ENCODE measurements at regions of chr14 and their contacts with region 1.

Region 1: GRCh38 chr14:70714055-70714621 is 72.4 kb downstream of the TTC9 start:
- DNase-seq: peak; percentile 67
- H3K4me3 ChIP-seq: no peak overlapping the region
- H3K27ac ChIP-seq: no peak overlapping the region
- H3K4me1 ChIP-seq: no peaks in the 10 kb centered on the region
- H3K27me3 ChIP-seq: peaks cover 3 to 14% of the 10 kb centered on the region in 2 experiments
- CTCF ChIP-seq: peak; percentile 33 to 46
- POLR2A ChIP-seq: no peak

Region 2: GRCh38 chr14:69784942-69785341 is 929.2 kb before region 1 on chr14:
- CTCF ChIA-PET with region 1: no interaction called
- POLR2A ChIA-PET with region 1: no interaction called
- dilution Hi-C with region 1: no loop called
- intact Hi-C with region 1: no loop called
- DNase-seq: no peak
- H3K4me3 ChIP-seq: no peak overlapping the region
- H3K27ac ChIP-seq: no peak overlapping the region
- H3K4me1 ChIP-seq: no peaks in the 10 kb centered on the region
- H3K27me3 ChIP-seq: no peaks in the 10 kb centered on the region
- CTCF ChIP-seq: no peak
- POLR2A ChIP-seq: no peak

Region 3: GRCh38 chr14:70622111-70622712 is 91.9 kb before region 1 on chr14:
- CTCF ChIA-PET with region 1: interaction called, 17 read pairs
- POLR2A ChIA-PET with region 1: no interaction called
- dilution Hi-C with region 1: no loop called
- intact Hi-C with region 1: loop called (anchors 1 kb)
- DNase-seq: peak; percentile 45
- H3K4me3 ChIP-seq: no peak overlapping the region
- H3K27ac ChIP-seq: no peak overlapping the region
- H3K4me1 ChIP-seq: no peaks in the 10 kb centered on the region
- H3K27me3 ChIP-seq: peaks cover 0 to 3% of the 10 kb centered on the region in 2 experiments
- CTCF ChIP-seq: peak; percentile 40 to 55
- POLR2A ChIP-seq: no peak

Region 4: DNA sequence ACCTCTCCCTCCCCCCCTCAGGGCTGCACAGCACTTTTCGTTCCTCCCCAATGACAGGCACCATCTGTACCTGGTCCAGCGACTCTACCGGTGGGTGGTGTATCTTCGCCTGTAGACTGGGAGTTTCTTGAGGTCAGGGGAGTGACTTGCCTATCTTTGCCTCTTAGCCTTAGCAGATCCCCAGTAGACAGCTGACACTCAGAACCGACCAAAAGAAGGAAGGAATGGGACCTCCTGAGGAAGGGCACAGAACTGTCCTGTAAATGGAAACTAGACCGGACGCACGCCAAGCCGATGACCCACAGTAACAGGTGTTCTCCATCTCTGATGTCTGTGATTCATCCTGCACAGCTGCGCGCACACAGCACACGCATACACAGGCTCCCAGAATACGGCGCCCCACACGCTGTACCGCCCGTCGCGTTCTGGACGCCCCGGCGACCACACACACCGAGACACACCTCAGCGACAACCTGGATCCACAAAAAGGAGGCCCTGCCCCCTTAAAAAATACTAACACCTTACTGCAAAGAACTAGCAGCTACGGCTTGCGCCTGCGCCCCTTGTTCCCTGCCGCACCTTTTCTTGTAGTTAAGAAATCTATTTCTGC is 73.1 kb before region 1 on chr14:
- CTCF ChIA-PET with region 1: no interaction called
- POLR2A ChIA-PET with region 1: no interaction called
- dilution Hi-C with region 1: no loop called
- intact Hi-C with region 1: loop called (anchors 5 kb)
- DNase-seq: peak; percentile 6
- H3K4me3 ChIP-seq: peak overlapping the region in 1 of 3 experiments; percentile 53
- H3K27ac ChIP-seq: no peak overlapping the region
- H3K4me1 ChIP-seq: no peaks in the 10 kb centered on the region
- H3K27me3 ChIP-seq: peaks cover 34 to 44% of the 10 kb centered on the region in 2 experiments
- CTCF ChIP-seq: no peak
- POLR2A ChIP-seq: no peak

Region 5: GRCh38 chr14:70755655-70756054 is 41.5 kb after region 1 on chr14:
- CTCF ChIA-PET with region 1: no interaction called
- POLR2A ChIA-PET with region 1: no interaction called
- dilution Hi-C with region 1: no loop called
- intact Hi-C with region 1: loop called (anchors 1 kb)
- DNase-seq: no peak
- H3K4me3 ChIP-seq: no peak overlapping the region
- H3K27ac ChIP-seq: no peak overlapping the region
- H3K4me1 ChIP-seq: no peaks in the 10 kb centered on the region
- H3K27me3 ChIP-seq: no peaks in the 10 kb centered on the region
- CTCF ChIP-seq: no peak
- POLR2A ChIP-seq: no peak

Measured in endothelial cell of umbilical vein (primary cell).